Activated CD8-positive, alpha-beta T cell treated with anti-CD3 and anti-CD28 coated beads for 36 hours (primary cell): ENCODE measurements at regions of chr12 and their contacts with region 1.

Region 1: DNA sequence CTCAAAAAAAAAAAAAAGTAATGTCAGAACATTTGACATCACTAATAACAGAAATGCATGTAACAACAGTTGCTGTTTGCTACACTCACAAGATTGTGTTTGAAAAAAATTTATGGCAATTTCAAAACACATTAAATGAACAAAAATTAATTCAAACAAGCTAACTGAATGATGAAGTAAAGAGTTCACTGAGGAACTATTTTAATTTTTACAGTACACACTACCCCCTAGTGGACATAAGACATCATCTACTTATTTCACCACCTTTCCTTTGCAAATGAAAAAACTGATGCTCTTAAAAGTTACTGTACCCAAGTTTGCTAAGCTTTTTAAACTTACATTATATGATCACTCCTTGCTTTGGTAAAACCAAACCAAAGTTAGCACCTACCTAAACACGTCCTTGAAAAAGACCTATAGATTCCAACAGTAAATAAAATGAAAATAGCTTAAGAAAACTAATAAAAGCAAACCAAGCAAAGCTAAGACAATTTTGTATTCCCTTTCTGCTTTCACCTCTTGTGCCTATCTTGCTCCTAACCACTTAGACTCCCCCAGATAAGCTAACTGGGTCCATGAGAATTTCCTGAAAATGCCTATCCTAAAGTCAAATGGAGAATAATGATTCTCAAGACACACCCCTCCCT is 22.2 kb downstream of the UBE2N start:
- DNase-seq: no peak
- ATAC-seq: peak; percentile 56
- H3K4me3 Mint-ChIP-seq: no peak overlapping the region
- H3K27ac Mint-ChIP-seq: peak overlapping the region; percentile 31
- H3K4me1 Mint-ChIP-seq: peaks cover 85% of the 10 kb centered on the region
- H3K27me3 Mint-ChIP-seq: no peaks in the 10 kb centered on the region
- CTCF ChIP-seq: peak; percentile 78

Region 2: GRCh38 chr12:93205361-93205760 is 214.2 kb before region 1 on chr12:
- CTCF ChIA-PET with region 1: no interaction called
- POLR2A ChIA-PET with region 1: no interaction called
- intact Hi-C with region 1: no loop called
- DNase-seq: no peak
- ATAC-seq: no peak
- H3K4me3 Mint-ChIP-seq: no peak overlapping the region
- H3K27ac Mint-ChIP-seq: no peak overlapping the region
- H3K4me1 Mint-ChIP-seq: peaks cover 3% of the 10 kb centered on the region
- H3K27me3 Mint-ChIP-seq: peaks cover 5% of the 10 kb centered on the region
- CTCF ChIP-seq: no peak

Region 3: DNA sequence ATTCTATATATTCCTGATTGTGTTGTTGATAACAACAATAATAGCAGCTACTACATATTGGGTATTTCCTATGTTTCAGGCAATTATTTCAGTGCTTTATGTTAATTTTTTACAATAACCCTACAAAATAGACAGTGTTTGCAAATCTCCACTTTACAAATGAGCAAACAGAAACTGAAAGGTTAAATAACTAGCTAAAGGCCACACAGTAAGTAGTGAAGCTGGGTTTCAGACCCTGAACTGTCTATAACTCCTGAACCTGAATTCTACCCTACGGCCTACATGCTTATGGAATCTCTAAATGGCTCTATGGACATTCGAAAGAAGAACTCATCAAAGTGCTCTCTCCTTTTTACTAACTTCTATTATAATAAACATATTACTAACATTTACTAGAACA is 61.5 kb before region 1 on chr12:
- CTCF ChIA-PET with region 1: no interaction called
- POLR2A ChIA-PET with region 1: no interaction called
- intact Hi-C with region 1: no loop called
- DNase-seq: no peak
- ATAC-seq: no peak
- H3K4me3 Mint-ChIP-seq: no peak overlapping the region
- H3K27ac Mint-ChIP-seq: no peak overlapping the region
- H3K4me1 Mint-ChIP-seq: peaks cover under 1% of the 10 kb centered on the region
- H3K27me3 Mint-ChIP-seq: no peaks in the 10 kb centered on the region
- CTCF ChIP-seq: no peak

Region 4: DNA sequence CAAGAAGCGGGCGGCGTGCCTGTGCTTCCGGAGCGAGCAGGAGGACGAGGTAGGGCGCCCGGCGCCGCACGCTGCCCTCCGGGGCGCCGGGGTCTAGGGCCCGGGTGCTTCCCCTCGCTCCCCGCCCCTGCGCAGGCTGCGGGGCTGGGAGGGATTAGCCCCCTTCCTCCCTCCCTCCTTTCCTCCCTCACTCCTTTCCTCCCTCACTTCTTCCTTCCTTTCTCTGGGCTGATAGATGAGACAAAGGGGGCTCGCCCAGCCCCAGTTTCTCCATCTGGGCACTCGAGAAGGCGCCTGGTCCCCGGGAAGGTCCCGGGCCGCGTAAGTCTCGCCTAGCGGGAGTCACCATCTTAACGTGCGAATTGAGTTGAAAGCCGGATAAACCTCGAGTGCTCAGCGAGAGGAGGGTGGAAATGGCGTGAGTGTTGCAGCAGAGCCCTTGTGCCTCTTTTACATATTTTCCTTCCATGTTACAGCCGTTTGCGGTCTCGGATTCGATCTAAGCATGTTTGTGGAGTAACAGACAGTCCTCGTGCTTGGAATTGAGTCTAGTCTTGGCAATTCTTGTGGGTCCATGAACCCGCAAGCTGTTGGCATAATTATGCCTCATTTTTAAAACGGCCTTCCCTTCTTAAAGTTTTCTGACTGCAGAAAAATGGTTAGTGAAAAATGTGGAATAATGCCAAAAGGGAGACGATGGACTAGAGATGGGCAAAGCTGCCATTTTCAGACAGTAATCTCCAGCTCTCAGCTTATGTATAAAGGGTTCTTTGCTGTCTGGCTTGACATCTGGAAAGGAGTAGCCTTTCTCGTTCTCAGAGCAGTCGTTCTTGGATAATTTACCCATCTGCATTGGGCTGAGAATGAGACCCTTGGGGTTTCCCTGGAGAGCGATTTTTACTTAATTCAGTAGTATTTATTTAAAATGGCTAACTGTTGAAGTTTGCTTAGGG is 40.9 kb before region 1 on chr12:
- CTCF ChIA-PET with region 1: interaction called, 47 read pairs
- POLR2A ChIA-PET with region 1: no interaction called
- intact Hi-C with region 1: no loop called
- DNase-seq: peak; percentile 76
- ATAC-seq: peak; percentile 65
- H3K4me3 Mint-ChIP-seq: peak overlapping the region; percentile 92
- H3K27ac Mint-ChIP-seq: peak overlapping the region; percentile 99
- H3K4me1 Mint-ChIP-seq: peaks cover 37% of the 10 kb centered on the region
- H3K27me3 Mint-ChIP-seq: no peaks in the 10 kb centered on the region
- CTCF ChIP-seq: no peak

Region 5: GRCh38 chr12:93397412-93397811 is 22.1 kb before region 1 on chr12:
- CTCF ChIA-PET with region 1: interaction called, 31 read pairs
- POLR2A ChIA-PET with region 1: no interaction called
- intact Hi-C with region 1: no loop called
- DNase-seq: no peak
- ATAC-seq: no peak
- H3K4me3 Mint-ChIP-seq: no peak overlapping the region
- H3K27ac Mint-ChIP-seq: no peak overlapping the region
- H3K4me1 Mint-ChIP-seq: peaks cover 7% of the 10 kb centered on the region
- H3K27me3 Mint-ChIP-seq: no peaks in the 10 kb centered on the region
- CTCF ChIP-seq: no peak

Region 6: DNA sequence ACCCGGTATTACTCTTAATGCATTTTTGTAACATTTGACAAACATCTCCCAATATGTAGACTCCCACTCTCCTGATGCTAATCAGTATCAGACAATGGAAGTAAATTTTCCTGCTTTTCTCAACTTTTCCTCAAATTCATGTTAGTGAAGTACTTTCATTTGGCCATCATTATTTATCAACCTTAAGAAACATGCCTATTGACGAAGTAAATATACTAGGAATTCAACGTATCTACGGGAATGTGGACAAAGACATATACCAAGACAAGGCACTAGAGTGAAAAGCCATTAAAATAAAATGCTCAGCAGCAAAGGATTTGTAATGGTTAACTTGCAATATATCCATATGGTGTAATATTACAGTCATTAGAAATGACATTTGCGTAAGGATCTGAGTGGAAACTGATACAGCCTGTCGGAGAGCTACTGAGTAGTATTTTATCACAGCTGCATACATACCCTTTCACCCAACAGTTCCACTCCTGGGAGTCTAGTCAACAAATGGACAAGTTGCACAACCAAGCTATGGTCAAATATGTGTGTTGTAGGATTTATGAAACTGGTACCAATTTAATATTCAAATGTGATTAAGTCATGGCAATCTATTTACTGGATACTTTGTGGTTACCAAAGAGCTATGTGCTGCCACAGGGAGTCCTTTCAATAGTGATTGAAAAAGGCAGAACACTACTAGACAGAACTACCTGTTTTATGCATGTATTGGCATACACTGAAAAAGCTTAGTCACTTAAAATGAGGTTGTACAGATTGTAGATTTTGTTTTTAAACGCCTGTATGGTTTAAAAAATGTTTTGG is 15.3 kb before region 1 on chr12:
- CTCF ChIA-PET with region 1: interaction called, 23 read pairs
- POLR2A ChIA-PET with region 1: interaction called, 5 read pairs
- intact Hi-C with region 1: no loop called
- DNase-seq: no peak
- ATAC-seq: no peak
- H3K4me3 Mint-ChIP-seq: no peak overlapping the region
- H3K27ac Mint-ChIP-seq: peak overlapping the region; percentile 57
- H3K4me1 Mint-ChIP-seq: peaks cover 22% of the 10 kb centered on the region
- H3K27me3 Mint-ChIP-seq: no peaks in the 10 kb centered on the region
- CTCF ChIP-seq: no peak

Region 7: GRCh38 chr12:93434256-93434865 is 14.8 kb after region 1 on chr12:
- CTCF ChIA-PET with region 1: interaction called, 36 read pairs
- POLR2A ChIA-PET with region 1: interaction called, 4 read pairs
- intact Hi-C with region 1: loop called (anchors 2 kb)
- DNase-seq: no peak
- ATAC-seq: no peak
- H3K4me3 Mint-ChIP-seq: no peak overlapping the region
- H3K27ac Mint-ChIP-seq: no peak overlapping the region
- H3K4me1 Mint-ChIP-seq: peaks cover 78% of the 10 kb centered on the region
- H3K27me3 Mint-ChIP-seq: no peaks in the 10 kb centered on the region
- CTCF ChIP-seq: no peak

Region 8: GRCh38 chr12:93441617-93442410 is 22.3 kb after region 1 on chr12 and contains the start of gene UBE2N:
- CTCF ChIA-PET with region 1: interaction called, 21 read pairs
- POLR2A ChIA-PET with region 1: interaction called, 4 read pairs
- intact Hi-C with region 1: loop called (anchors 2 kb)
- DNase-seq: peak; percentile 96
- ATAC-seq: peak; percentile 86
- H3K4me3 Mint-ChIP-seq: peak within 1 kb of the TSS; percentile 99
- H3K27ac Mint-ChIP-seq: peak within 1 kb of the TSS; percentile 98
- H3K4me1 Mint-ChIP-seq: peaks cover 48% of the 10 kb centered on the region
- H3K27me3 Mint-ChIP-seq: no peaks in the 10 kb centered on the region
- CTCF ChIP-seq: no peak
- total RNA-seq, gene UBE2N: 186 to 192 TPM